ENCODE measurements at regions of chr18 and their contacts with region 1.

Region 1: DNA sequence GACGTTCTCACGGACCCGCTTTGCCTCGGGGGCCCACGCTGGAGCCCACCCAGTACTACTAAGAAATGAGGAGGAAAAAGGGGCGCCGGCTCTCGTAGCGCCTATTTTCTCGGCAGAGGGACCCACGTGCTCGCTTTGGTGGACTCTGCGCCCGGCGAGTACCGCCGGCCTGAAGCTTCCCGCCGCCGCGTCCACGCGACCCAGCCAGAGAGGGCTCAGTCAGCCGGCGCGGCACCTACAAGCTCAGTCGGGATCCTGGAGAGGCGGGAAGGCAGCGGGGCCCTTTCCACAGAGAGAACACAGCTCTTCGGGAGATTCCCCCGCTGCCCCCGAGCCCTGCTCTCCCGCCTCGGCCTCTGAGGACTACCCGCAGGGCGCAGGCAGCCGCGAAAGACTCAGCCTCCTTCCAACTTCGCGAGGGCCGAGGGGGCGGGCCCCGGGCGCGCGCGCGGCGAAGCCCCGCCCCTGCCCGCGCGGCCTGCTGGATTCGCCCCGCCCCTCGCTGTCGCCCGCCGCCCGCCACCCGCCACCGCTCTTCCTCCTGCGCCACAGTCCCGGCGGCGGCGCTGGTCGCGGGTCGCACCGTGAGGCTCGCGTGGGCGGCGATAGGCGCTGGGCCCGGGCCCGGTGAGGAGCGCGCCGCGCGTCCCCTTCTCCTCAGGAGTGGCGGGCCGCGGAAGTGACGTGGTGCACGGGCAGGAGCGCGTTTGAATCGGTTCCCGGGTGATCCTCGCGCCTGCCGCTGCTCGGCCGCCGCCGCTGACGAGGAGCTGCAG is at the start of gene SMCHD1:
- DNase-seq: peak; percentile 54
- H3K4me3 ChIP-seq: peak within 1 kb of the TSS; percentile 93 to 98 (median 96)
- H3K27ac ChIP-seq: peak within 1 kb of the TSS; percentile 98 to 99 (median 98)
- H3K4me1 ChIP-seq: peaks cover 3 to 45% (median 19%) of the 10 kb centered on the region in 3 donors
- H3K27me3 ChIP-seq: no peaks in the 10 kb centered on the region
- CTCF ChIP-seq: no peak
- POLR2A ChIP-seq: peak in 3 of 4 donors; percentile 62 to 98 (median 93)
- total RNA-seq, gene SMCHD1: 32.8 to 69.6 (median 33.8) TPM

Region 2: DNA sequence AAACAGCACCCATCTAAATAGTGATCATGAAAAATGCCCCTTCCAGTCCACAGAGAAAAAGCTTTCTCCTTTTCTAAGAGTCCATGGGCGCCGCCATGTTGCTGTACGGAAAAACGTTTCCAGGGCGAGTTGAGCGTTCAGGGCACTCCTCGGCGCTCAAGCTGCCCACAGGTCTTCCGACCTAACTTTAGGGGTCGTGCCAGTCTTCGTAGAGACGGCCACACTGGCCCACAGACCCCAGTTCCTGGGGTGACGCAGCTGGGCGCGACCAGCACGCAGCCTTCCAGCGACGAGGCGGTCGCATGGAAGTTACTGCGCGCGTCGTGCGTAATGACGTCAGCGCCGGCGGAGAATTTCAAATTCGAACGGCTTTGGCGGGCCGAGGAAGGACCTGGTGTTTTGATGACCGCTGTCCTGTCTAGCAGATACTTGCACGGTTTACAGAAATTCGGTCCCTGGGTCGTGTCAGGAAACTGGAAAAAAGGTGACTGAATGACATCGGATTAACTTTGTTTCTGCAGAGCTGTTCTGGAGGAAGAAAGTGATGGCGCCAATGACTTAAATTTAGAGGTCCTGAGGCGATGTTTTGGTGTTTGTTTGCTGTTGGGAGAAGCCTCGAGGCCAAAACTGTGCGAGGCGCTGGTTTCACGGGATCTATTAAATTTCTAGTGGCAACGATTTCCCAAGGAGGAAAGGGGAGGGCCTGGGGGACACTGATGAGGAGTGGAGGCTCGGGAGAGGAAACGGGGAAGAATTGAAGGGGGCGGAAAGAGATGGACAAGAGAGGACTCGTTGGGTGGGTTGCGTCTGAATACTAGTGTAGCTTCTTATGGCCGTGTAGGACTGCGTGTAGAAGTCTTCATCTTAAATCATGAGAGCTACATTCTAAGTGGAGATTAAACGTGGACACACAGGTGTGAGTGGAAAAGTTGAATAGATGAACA is 83.9 kb before region 1 on chr18 and contains the starts of genes METTL4 and NDC80:
- intact Hi-C with region 1: loop called (anchors 2 kb)
- DNase-seq: peak; percentile 9
- H3K4me3 ChIP-seq: peak within 1 kb of the TSS; percentile 62 to 90 (median 70)
- H3K27ac ChIP-seq: peak within 1 kb of the TSS; percentile 96 to 98 (median 96)
- H3K4me1 ChIP-seq: peaks cover 6 to 43% (median 11%) of the 10 kb centered on the region in 3 donors
- H3K27me3 ChIP-seq: no peaks in the 10 kb centered on the region
- CTCF ChIP-seq: peak in 1 of 6 experiments; percentile 27
- POLR2A ChIP-seq: peak in 3 of 4 donors; percentile 34 to 54 (median 45)
- total RNA-seq, gene METTL4: 1.8 to 6.7 (median 4.4) TPM
- total RNA-seq, gene NDC80: 2.9 to 13.8 (median 8.0) TPM

Measured in esophagus squamous epithelium (tissue), 5 donors.